Psoas muscle (tissue), 8 donors: ENCODE measurements at regions of chr5 and their contacts with region 1.

Region 1: GRCh38 chr5:124661317-124662141 is 84.9 kb downstream of the ZNF608 start:
- DNase-seq: no peak
- ATAC-seq: peak in 3 of 4 donors; percentile 17 to 30 (median 22)
- H3K4me3 ChIP-seq: peak overlapping the region; percentile 36
- H3K27ac ChIP-seq: peak overlapping the region; percentile 77
- H3K4me1 ChIP-seq: peaks cover 61% of the 10 kb centered on the region
- H3K27me3 ChIP-seq: no peaks in the 10 kb centered on the region
- CTCF ChIP-seq: no peak

Region 2: GRCh38 chr5:124583469-124584350 is 77.8 kb before region 1 on chr5:
- intact Hi-C with region 1: no loop called
- DNase-seq: no peak
- ATAC-seq: no peak
- H3K4me3 ChIP-seq: no peak overlapping the region
- H3K27ac ChIP-seq: no peak overlapping the region
- H3K4me1 ChIP-seq: no peaks in the 10 kb centered on the region
- H3K27me3 ChIP-seq: no peaks in the 10 kb centered on the region
- CTCF ChIP-seq: no peak

Region 3: GRCh38 chr5:124692324-124692723 is 30.8 kb after region 1 on chr5:
- intact Hi-C with region 1: loop called in 1 of 2 experiments (anchors 1 kb)
- DNase-seq: no peak
- ATAC-seq: no peak
- H3K4me3 ChIP-seq: no peak overlapping the region
- H3K27ac ChIP-seq: no peak overlapping the region
- H3K4me1 ChIP-seq: peaks cover 6% of the 10 kb centered on the region
- H3K27me3 ChIP-seq: no peaks in the 10 kb centered on the region
- CTCF ChIP-seq: no peak